Mucosa of descending colon (tissue), 3 donors: ENCODE measurements at regions of chr2 and their contacts with region 1.

Region 1: GRCh38 chr2:105114551-105114950 is 76.7 kb downstream of the MRPS9 start:
- DNase-seq: no peak
- ATAC-seq: peak; percentile 76
- H3K4me3 ChIP-seq: no peak overlapping the region
- H3K4me1 ChIP-seq: no peaks in the 10 kb centered on the region
- CTCF ChIP-seq: peak; percentile 34

Region 2: GRCh38 chr2:105235388-105236054 is 121.0 kb after region 1 on chr2:
- intact Hi-C with region 1: loop called (anchors 5 kb)
- DNase-seq: peak; percentile 63 to 97 (median 82)
- ATAC-seq: peak; percentile 77
- H3K4me3 ChIP-seq: no peak overlapping the region
- H3K4me1 ChIP-seq: no peaks in the 10 kb centered on the region
- CTCF ChIP-seq: peak; percentile 35